Activated CD4-positive, alpha-beta T cell treated with anti-CD3 and anti-CD28 coated beads for 36 hours (primary cell): ENCODE measurements at regions of chr2 and their contacts with region 1.

Region 1: GRCh38 chr2:177239932-177240630 is 24.4 kb downstream of the NFE2L2 start:
- DNase-seq: peak; percentile 57
- ATAC-seq: peak; percentile 86
- H3K4me3 Mint-ChIP-seq: peak overlapping the region; percentile 4
- H3K27ac Mint-ChIP-seq: peak overlapping the region; percentile 94
- H3K4me1 Mint-ChIP-seq: peaks cover 80% of the 10 kb centered on the region
- H3K27me3 Mint-ChIP-seq: no peaks in the 10 kb centered on the region

Region 2: DNA sequence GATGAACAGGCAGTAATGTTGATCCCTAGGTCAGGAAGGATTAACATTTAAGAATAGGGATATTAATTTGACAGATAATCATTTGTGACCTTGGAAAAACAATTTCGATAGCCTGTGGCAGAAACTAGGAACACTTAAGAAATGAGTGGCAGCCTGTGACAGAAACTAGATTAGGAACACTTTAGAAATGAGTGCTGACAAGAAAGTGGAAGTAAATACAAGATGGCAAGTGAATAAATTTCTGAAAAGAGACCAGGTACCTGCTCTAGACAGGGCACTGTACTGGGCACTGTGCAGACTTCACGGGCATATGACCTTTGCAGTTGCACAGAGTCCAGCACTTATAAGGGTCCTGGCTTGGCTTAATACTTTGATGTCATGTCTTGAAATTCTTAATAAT is 33.0 kb before region 1 on chr2:
- CTCF ChIA-PET with region 1: no interaction called
- POLR2A ChIA-PET with region 1: no interaction called
- intact Hi-C with region 1: loop called in 1 of 2 experiments (anchors 5 kb)
- DNase-seq: no peak
- ATAC-seq: peak; percentile 57
- H3K4me3 Mint-ChIP-seq: no peak overlapping the region
- H3K27ac Mint-ChIP-seq: peak overlapping the region; percentile 34
- H3K4me1 Mint-ChIP-seq: peaks cover 26% of the 10 kb centered on the region
- H3K27me3 Mint-ChIP-seq: no peaks in the 10 kb centered on the region

Region 3: GRCh38 chr2:177229448-177230242 is 10.4 kb before region 1 on chr2:
- CTCF ChIA-PET with region 1: interaction called, 10 read pairs
- POLR2A ChIA-PET with region 1: interaction called, 6 read pairs
- intact Hi-C with region 1: no loop called
- DNase-seq: no peak
- ATAC-seq: peak; percentile 54
- H3K4me3 Mint-ChIP-seq: no peak overlapping the region
- H3K27ac Mint-ChIP-seq: peak overlapping the region; percentile 79
- H3K4me1 Mint-ChIP-seq: peaks cover 44% of the 10 kb centered on the region
- H3K27me3 Mint-ChIP-seq: no peaks in the 10 kb centered on the region

Region 4: GRCh38 chr2:177254433-177255226 is 14.5 kb after region 1 on chr2:
- CTCF ChIA-PET with region 1: interaction called, 4 read pairs
- POLR2A ChIA-PET with region 1: interaction called, 3 read pairs
- intact Hi-C with region 1: loop called in 1 of 2 experiments (anchors 1 kb)
- DNase-seq: peak; percentile 58
- ATAC-seq: no peak
- H3K4me3 Mint-ChIP-seq: no peak overlapping the region
- H3K27ac Mint-ChIP-seq: peak overlapping the region; percentile 88
- H3K4me1 Mint-ChIP-seq: peaks cover 95% of the 10 kb centered on the region
- H3K27me3 Mint-ChIP-seq: no peaks in the 10 kb centered on the region